K562 (cell line): ENCODE measurements at regions of chr6 and their contacts with region 1.

Region 1: GRCh38 chr6:68651011-68651985 is 16.2 kb downstream of the ADGRB3 start:
- DNase-seq: no peak
- ATAC-seq: no peak
- H3K4me3 ChIP-seq: no peak overlapping the region
- H3K27ac ChIP-seq: peak overlapping the region; percentile 88
- H3K4me1 ChIP-seq: peaks cover 5 to 22% of the 10 kb centered on the region in 2 experiments; a peak in 4 of 5 replicates
- H3K27me3 ChIP-seq: no peaks in the 10 kb centered on the region
- CTCF ChIP-seq: no peak
- EP300 ChIP-seq: no peak; the same call in 1 of the 2 replicates
- POLR2A ChIP-seq: no peak
- RAD21 ChIP-seq: no peak

Region 2: GRCh38 chr6:67888886-67889681 is 762.2 kb before region 1 on chr6:
- CTCF ChIA-PET with region 1: no interaction called
- POLR2A ChIA-PET with region 1: no interaction called
- in situ Hi-C with region 1: no loop called
- intact Hi-C with region 1: loop called (anchors 2 kb)
- DNase-seq: peak; percentile 45 to 97 (median 71)
- ATAC-seq: peak; percentile 69
- H3K4me3 ChIP-seq: peak overlapping the region; percentile 93
- H3K27ac ChIP-seq: peak overlapping the region; percentile 98
- H3K4me1 ChIP-seq: peaks cover 4 to 13% of the 10 kb centered on the region in 2 experiments; a peak in 2 of 5 replicates
- H3K27me3 ChIP-seq: no peaks in the 10 kb centered on the region
- CTCF ChIP-seq: no peak
- EP300 ChIP-seq: peak; percentile 100
- POLR2A ChIP-seq: peak; percentile 98
- RAD21 ChIP-seq: peak in 1 of 2 experiments; percentile 38; a peak in 1 of 4 replicates

Region 3: GRCh38 chr6:68040312-68040778 is 611.0 kb before region 1 on chr6:
- CTCF ChIA-PET with region 1: no interaction called
- POLR2A ChIA-PET with region 1: no interaction called
- in situ Hi-C with region 1: no loop called
- intact Hi-C with region 1: loop called (anchors 2 kb)
- DNase-seq: peak in 1 of 4 experiments; percentile 74
- ATAC-seq: peak; percentile 36
- H3K4me3 ChIP-seq: peak overlapping the region; percentile 60
- H3K27ac ChIP-seq: peak overlapping the region; percentile 97
- H3K4me1 ChIP-seq: peaks cover 0 to 4% of the 10 kb centered on the region in 2 experiments; a peak in 3 of 5 replicates
- H3K27me3 ChIP-seq: no peaks in the 10 kb centered on the region
- CTCF ChIP-seq: no peak
- EP300 ChIP-seq: peak; percentile 58
- POLR2A ChIP-seq: peak; percentile 70
- RAD21 ChIP-seq: 0 out of 4 replicates have a peak, but pooled peaks of 1 of the 2 experiments have one; percentile 17

Region 4: GRCh38 chr6:68639826-68640490 is 11.3 kb before region 1 on chr6:
- CTCF ChIA-PET with region 1: no interaction called
- POLR2A ChIA-PET with region 1: interaction called, 13 read pairs
- in situ Hi-C with region 1: no loop called
- intact Hi-C with region 1: loop called (anchors 1 kb)
- DNase-seq: peak in 2 of 4 experiments; percentile 66 to 71
- ATAC-seq: peak; percentile 45
- H3K4me3 ChIP-seq: peak overlapping the region; percentile 31
- H3K27ac ChIP-seq: peak overlapping the region; percentile 61
- H3K4me1 ChIP-seq: peaks cover 3 to 23% of the 10 kb centered on the region in 2 experiments; a peak in 4 of 5 replicates
- H3K27me3 ChIP-seq: no peaks in the 10 kb centered on the region
- CTCF ChIP-seq: peak in 1 of 3 experiments; percentile 5; a peak in 1 of 6 replicates
- EP300 ChIP-seq: peak; percentile 46; the same call in 1 of the 2 replicates
- POLR2A ChIP-seq: no peak
- RAD21 ChIP-seq: no peak; a peak in 1 of 4 replicates

Region 5: GRCh38 chr6:68689910-68690309 is 38.6 kb after region 1 on chr6:
- CTCF ChIA-PET with region 1: no interaction called
- POLR2A ChIA-PET with region 1: no interaction called
- in situ Hi-C with region 1: no loop called
- intact Hi-C with region 1: loop called (anchors 5 kb)
- DNase-seq: peak in 2 of 4 experiments; percentile 36 to 53
- ATAC-seq: peak; percentile 76
- H3K4me3 ChIP-seq: no peak overlapping the region
- H3K27ac ChIP-seq: peak overlapping the region; percentile 72
- H3K4me1 ChIP-seq: peaks cover 0 to 48% of the 10 kb centered on the region in 2 experiments; a peak in 3 of 5 replicates
- H3K27me3 ChIP-seq: no peaks in the 10 kb centered on the region
- CTCF ChIP-seq: no peak
- EP300 ChIP-seq: no peak
- POLR2A ChIP-seq: no peak
- RAD21 ChIP-seq: no peak

Region 6: DNA sequence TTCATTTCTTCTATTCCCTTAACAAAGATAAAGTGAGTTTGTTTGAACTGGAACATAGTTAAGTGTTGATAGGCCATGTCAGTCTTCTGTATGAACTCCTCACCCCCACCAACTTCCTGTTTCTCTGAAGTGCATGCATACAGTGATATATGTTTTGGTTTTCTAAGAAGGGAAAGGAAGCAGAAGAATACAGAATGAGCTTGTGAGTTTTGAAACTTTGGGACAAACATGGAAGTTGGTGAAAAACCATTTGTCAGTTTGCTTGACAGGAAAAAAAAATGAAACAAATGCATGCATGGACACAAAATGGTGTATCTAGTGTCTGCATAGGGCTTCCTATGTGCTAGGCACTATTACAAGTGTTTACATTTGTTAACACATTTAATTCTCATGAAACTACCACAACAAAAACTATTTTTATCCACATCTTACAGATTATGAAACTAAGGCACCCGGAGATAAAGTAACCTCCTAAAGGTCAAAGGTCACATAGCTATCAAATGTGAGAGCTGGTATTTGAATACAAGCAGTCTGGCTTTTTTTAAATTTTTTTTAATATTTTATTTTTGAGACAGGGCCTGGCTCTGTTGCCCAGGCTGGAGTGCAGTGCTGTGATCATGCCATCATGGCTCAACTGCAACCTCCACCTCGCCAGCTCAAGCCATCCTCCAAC is 89.7 kb after region 1 on chr6:
- CTCF ChIA-PET with region 1: interaction called, 4 read pairs
- POLR2A ChIA-PET with region 1: no interaction called
- in situ Hi-C with region 1: no loop called
- intact Hi-C with region 1: loop called (anchors 5 kb)
- DNase-seq: peak in 3 of 4 experiments; percentile 17 to 82 (median 68)
- ATAC-seq: peak; percentile 78
- H3K4me3 ChIP-seq: no peak overlapping the region
- H3K27ac ChIP-seq: peak overlapping the region; percentile 91
- H3K4me1 ChIP-seq: peaks cover 6 to 51% of the 10 kb centered on the region in 2 experiments; a peak in 4 of 5 replicates
- H3K27me3 ChIP-seq: no peaks in the 10 kb centered on the region
- CTCF ChIP-seq: no peak
- EP300 ChIP-seq: peak; percentile 86
- POLR2A ChIP-seq: no peak
- RAD21 ChIP-seq: peak in 1 of 2 experiments; percentile 24; a peak in 1 of 4 replicates

Region 7: DNA sequence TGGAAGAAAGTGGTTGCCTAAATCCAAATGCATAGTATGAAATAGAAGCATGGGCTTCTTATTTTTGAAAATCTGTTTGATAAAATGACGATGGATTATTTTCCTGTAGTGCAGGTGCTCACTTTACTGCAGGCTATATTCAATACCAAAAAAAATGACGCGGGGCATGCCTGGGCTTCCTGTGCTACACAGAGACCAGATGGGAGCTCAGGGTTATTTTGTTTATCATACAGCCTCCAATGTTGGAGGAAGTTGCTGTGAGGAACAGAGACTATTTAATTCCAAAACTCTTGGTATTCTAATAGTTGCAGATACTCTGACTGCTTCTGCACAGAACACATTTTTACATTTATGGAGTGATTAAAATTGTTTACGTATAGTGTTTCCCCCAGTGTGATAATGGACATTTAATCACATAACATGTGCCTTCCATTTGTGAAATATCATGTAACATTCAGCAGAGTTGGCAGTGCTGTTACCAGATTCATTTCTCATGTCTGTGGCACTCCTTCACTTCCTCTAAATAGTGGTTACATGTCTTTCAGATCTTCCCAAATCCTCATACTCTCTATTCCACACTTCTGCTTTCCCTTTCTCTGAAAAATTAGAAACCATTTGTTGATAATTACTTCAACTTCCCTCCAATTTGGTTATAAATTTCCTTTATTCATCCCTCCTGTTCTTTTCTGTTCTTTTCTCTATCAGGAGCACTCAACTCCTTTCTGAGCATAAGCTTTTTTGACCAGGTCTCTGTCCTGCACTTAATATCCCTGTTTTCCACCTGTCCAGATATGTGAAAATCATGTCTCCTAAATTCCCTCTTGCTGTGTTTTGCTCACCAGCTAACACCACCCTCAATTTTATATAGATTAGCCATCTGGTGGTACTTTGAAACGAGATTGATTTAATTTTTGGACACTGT is 105.4 kb after region 1 on chr6:
- CTCF ChIA-PET with region 1: no interaction called
- POLR2A ChIA-PET with region 1: no interaction called
- in situ Hi-C with region 1: loop called (anchors 5 kb)
- intact Hi-C with region 1: no loop called
- DNase-seq: no peak
- ATAC-seq: peak; percentile 16; the same call in 2 of the 3 replicates
- H3K4me3 ChIP-seq: no peak overlapping the region
- H3K27ac ChIP-seq: peak overlapping the region; percentile 31; the same call in 1 of the 3 replicates
- H3K4me1 ChIP-seq: peaks cover 0 to 19% of the 10 kb centered on the region in 2 experiments; a peak in 2 of 5 replicates
- H3K27me3 ChIP-seq: no peaks in the 10 kb centered on the region
- CTCF ChIP-seq: no peak
- EP300 ChIP-seq: no peak
- POLR2A ChIP-seq: no peak
- RAD21 ChIP-seq: no peak